Kidney (tissue), 22 donors: ENCODE measurements at regions of chr20 and their contacts with region 1.

Region 1: DNA sequence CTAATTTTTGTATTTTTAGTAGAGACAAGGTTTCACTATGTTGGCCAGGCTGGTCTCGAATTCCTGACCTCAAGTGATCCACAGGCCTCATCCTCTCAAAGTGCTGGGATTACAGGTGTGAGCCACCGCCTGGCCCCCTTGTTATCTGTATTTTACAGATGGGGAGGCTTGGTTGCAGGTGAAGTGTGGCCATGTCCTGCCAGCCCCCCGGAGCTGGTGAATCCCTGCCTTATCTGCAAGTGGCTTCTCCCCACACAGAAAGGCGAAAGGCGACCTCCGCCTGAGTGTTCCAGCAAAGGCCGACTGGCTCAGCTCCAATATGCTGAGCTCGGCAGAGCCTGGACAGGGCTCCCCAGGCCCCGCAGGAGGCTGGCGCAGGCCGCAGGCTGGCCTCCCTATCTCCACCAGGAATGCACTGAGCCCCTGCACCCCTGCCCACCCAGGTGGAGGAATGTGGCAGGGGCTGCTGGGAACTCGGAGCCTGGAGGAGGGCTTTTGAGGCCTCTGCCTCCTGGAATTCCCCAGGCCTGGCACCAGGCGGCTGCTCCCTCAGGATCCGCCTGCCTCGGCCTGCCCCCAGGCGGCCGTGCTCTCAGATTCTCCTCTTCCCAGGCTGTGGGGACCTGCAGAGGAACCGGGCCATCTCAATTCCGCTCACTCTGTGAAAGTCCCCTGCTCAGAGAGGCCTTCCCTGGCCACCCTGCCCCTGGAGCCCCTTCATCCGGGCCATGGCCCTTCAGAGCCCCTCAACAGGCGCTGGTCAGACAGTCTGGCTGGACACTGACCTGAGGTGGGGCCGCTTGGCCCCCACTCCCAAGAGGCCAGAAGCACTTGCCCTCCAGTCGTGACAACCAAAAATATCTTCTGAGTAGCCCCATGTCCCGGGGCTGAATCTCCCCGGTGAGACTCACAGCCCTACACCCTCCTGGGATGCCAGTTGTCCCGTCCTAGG is 9.3 kb upstream of the LAMA5 start:
- DNase-seq: peak in 4 of 5 donors; percentile 87 to 93 (median 89)
- H3K4me3 ChIP-seq: no peak overlapping the region
- H3K27ac ChIP-seq: peak overlapping the region in 1 of 2 donors; percentile 51
- H3K4me1 ChIP-seq: peaks cover 0 to 14% (median 11%) of the 10 kb centered on the region in 3 donors
- H3K27me3 ChIP-seq: no peaks in the 10 kb centered on the region
- CTCF ChIP-seq: peak; percentile 24

Region 2: GRCh38 chr20:62302341-62303058 is 73.9 kb before region 1 on chr20 and contains the start of gene ADRM1:
- intact Hi-C with region 1: loop called (anchors 5 kb)
- DNase-seq: peak; percentile 98 to 99 (median 99)
- H3K4me3 ChIP-seq: peak within 1 kb of the TSS; percentile 56 to 82 (median 68)
- H3K27ac ChIP-seq: peak within 1 kb of the TSS; percentile 98 to 99
- H3K4me1 ChIP-seq: peaks cover 0 to 28% (median 21%) of the 10 kb centered on the region in 3 donors
- H3K27me3 ChIP-seq: no peaks in the 10 kb centered on the region
- CTCF ChIP-seq: peak; percentile 89
- total RNA-seq, gene ADRM1: 64.4 TPM